ENCODE measurements at regions of chr18 and their contacts with region 1.

Region 1: DNA sequence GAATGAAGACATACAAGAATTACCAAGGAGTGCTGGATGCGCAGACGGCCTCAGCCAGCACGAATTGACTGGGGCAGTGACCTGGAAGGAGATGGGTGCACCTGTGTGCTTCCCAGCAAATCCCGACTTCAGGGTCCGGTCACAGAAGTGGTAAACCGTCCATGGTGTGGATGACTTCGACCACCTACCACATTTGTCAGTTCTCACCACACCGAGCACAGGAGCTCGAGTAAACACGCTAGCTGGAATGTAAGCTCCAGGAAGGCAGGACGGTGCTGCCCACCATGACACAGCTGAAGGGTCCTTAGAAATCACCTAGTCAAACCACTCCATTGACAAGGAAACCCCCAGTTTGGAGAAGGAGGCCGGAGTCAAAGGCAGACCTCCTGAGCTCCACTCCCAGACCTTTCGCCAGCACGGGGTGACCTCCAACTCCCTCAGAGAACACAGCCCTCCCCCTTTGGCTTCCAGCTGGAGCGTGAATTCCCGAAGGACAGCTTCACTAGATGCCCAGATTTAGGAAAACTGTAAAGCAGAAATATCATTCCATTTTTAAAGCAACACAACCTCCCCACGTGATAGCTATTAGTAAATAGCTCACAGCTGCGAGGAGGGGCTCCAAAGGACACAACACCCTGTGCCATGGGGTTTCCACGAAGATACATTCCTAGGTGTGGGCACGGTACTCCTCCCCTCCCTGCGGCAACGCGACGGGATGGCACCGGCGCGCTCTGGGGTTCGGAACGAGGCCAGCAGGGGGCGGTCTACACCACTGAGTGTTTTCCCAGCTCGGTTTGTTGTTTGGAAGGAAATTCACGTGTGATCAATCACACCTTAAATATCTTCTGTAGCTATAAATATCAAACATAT is 34.1 kb upstream of the GNAL start:
- DNase-seq: peak; percentile 37 to 65
- ATAC-seq: peak; percentile 88 to 93
- H3K4me3 ChIP-seq: 0 out of 3 replicates have a peak overlapping the region, but pooled peaks have one; percentile 29
- H3K27ac ChIP-seq: 0 out of 6 replicates have a peak overlapping the region, but pooled peaks of 1 of the 2 experiments have one; percentile 18
- H3K4me1 ChIP-seq: no peaks in the 10 kb centered on the region
- CTCF ChIP-seq: peak; percentile 78
- EP300 ChIP-seq: no peak
- POLR2A ChIP-seq: no peak
- RAD21 ChIP-seq: peak; percentile 76 to 84

Region 2: DNA sequence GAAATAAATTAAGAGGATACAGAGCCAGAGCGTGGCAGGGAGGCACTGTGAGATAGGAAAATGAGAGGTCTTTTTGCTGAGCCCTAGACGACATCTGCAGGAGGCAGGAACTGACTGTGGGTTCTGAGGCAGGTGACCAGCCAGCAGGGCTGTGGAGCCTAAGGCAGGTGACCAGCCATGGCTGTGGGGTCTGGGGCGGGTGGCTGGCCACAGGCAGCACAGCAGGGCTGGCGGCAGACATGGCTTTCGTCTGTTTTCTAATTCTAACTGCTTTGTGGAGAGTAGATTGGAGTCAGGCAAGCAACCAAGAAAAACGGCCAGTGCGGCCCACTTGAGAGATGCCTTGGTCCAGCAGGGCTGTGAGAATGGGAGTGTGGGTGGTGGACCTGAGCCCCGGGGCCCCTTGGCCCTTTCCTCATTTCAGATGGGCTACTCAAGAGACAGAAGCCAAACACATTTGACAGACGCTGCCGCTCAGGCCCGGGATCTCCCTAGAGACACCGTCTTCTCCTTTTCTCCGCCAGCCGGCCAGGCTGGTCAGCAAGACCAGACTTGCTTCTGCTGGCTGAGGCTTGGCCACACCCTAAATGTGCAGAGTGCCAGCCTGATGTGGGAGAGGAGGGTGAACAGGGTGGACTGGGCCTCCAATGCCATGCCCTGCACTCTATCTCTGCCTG is 14.4 kb after region 1 on chr18:
- CTCF ChIA-PET with region 1: interaction called, 21 read pairs
- POLR2A ChIA-PET with region 1: no interaction called
- DNase-seq: no peak
- ATAC-seq: peak in 1 of 2 experiments; percentile 30; a peak in 1 of 6 replicates
- H3K4me3 ChIP-seq: no peak overlapping the region
- H3K27ac ChIP-seq: no peak overlapping the region
- H3K4me1 ChIP-seq: no peaks in the 10 kb centered on the region
- CTCF ChIP-seq: no peak
- EP300 ChIP-seq: no peak
- POLR2A ChIP-seq: no peak
- RAD21 ChIP-seq: no peak

Region 3: DNA sequence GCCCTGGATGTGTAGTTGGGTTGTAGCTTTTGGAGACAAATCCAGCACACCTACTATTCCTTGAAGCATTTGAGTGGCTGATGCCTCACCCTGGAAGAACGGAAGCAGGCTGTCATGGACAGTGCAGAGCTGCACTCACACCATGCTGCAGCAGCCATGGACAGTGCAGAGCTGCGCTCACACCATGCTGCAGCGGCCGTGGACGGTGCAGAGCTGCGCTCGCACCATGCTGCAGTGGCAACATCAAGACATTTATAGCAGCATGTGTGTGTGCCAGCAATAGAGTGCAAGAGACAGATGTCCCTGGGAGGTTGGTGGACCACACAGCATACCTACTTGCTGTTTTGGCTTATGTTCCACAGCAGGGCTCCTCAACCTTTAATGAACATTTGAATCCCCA is 64.7 kb after region 1 on chr18:
- CTCF ChIA-PET with region 1: interaction called, 64 read pairs
- POLR2A ChIA-PET with region 1: no interaction called
- DNase-seq: no peak
- ATAC-seq: no peak
- H3K4me3 ChIP-seq: no peak overlapping the region
- H3K27ac ChIP-seq: no peak overlapping the region
- H3K4me1 ChIP-seq: no peaks in the 10 kb centered on the region
- CTCF ChIP-seq: no peak
- EP300 ChIP-seq: no peak
- POLR2A ChIP-seq: no peak
- RAD21 ChIP-seq: no peak

Region 4: DNA sequence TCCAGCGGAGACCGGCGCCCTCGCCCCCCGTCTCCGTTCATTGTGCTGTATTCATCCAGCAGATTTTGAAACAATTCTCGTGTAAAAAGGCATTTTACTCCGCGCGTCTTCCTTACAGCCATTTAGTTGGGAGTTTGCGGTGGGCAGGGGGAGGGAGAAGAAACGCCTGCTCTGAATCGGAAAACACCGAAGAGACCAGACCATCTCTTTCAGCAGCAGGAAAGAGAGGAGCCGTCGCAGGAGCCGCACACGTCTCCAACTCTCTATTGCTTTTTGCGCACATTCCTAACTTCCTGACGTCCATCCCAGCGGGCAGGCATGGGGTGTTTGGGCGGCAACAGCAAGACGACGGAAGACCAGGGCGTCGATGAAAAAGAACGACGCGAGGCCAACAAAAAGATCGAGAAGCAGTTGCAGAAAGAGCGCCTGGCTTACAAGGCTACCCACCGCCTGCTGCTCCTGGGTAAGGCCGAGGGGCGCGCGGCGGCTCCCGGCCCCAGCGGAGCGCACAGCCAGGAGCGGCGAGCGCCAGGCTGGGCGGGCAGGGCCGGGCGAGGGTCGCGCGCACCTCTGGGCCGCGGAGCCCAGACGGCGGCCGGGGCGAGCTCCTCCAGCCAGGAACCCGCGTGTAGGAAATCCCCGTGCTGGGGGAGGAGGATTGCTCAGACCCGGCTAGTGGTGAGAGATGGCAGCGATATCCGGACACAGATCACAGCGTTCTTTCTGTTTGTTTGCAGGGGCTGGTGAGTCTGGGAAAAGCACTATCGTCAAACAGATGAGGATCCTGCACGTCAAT is 97.3 kb after region 1 on chr18:
- CTCF ChIA-PET with region 1: no interaction called
- POLR2A ChIA-PET with region 1: no interaction called
- DNase-seq: peak; percentile 37 to 60
- ATAC-seq: peak; percentile 80 to 87
- H3K4me3 ChIP-seq: peak overlapping the region; percentile 52
- H3K27ac ChIP-seq: peak overlapping the region; percentile 69 to 86; a peak in 5 of 6 replicates
- H3K4me1 ChIP-seq: peaks cover 5% of the 10 kb centered on the region; the same call in 1 of the 3 replicates
- CTCF ChIP-seq: no peak
- EP300 ChIP-seq: no peak
- POLR2A ChIP-seq: no peak
- RAD21 ChIP-seq: no peak

Region 5: GRCh38 chr18:11775436-11776174 is 120.6 kb after region 1 on chr18:
- CTCF ChIA-PET with region 1: no interaction called
- POLR2A ChIA-PET with region 1: no interaction called
- DNase-seq: no peak
- ATAC-seq: no peak
- H3K4me3 ChIP-seq: no peak overlapping the region
- H3K27ac ChIP-seq: no peak overlapping the region
- H3K4me1 ChIP-seq: no peaks in the 10 kb centered on the region
- CTCF ChIP-seq: no peak
- EP300 ChIP-seq: no peak
- POLR2A ChIP-seq: no peak
- RAD21 ChIP-seq: no peak

Region 6: GRCh38 chr18:11808001-11808855 is 153.3 kb after region 1 on chr18:
- CTCF ChIA-PET with region 1: no interaction called
- POLR2A ChIA-PET with region 1: no interaction called
- DNase-seq: peak; percentile 71 to 85
- ATAC-seq: peak; percentile 97 to 98
- H3K4me3 ChIP-seq: no peak overlapping the region
- H3K27ac ChIP-seq: peak overlapping the region; percentile 74 to 80
- H3K4me1 ChIP-seq: peaks cover 30% of the 10 kb centered on the region
- CTCF ChIP-seq: no peak
- EP300 ChIP-seq: no peak
- POLR2A ChIP-seq: no peak
- RAD21 ChIP-seq: peak in 1 of 2 experiments; percentile 9; a peak in 1 of 5 replicates

Region 7: DNA sequence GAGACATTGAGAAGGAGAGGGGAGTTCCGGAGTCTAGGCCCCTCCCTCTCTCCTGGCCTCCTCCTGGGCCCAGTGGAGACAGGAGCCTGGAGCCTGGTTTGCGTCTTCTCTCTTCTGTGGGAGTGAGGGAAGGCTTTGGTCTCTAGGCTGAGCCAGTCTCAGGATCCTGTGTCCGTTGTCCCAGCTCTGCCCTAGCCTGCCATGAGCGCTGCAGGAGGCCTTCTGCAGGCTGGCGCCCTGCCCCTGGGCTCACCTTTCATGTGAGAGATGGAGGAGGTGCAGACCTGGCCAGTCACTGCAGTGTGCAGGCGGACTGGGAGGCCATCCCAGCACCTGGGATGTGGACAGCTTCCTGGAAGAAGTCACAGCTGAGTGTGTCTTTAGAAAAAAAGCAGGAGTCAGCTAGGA is 335.0 kb after region 1 on chr18:
- CTCF ChIA-PET with region 1: interaction called, 43 read pairs
- POLR2A ChIA-PET with region 1: no interaction called
- DNase-seq: no peak
- ATAC-seq: no peak
- H3K4me3 ChIP-seq: no peak overlapping the region
- H3K27ac ChIP-seq: peak overlapping the region in 1 of 2 experiments; percentile 66; a peak in 3 of 6 replicates
- H3K4me1 ChIP-seq: peaks cover 68% of the 10 kb centered on the region
- CTCF ChIP-seq: no peak
- EP300 ChIP-seq: no peak
- POLR2A ChIP-seq: no peak
- RAD21 ChIP-seq: no peak

Measured in A549 (cell line).